Activated T-helper 2 cell treated with anti-CD3 and anti-CD28 coated beads, Interferon-gamma antibody, Interleukin-2, Interleukin-4, amounts not matched to agents 10 μg/mL and 5 μg/mL and 100 μg/mL, durations not matched to agents 14 hours and 24 hours and 36 hours (primary cell): ENCODE measurements at regions of chr2 and their contacts with region 1.

Region 1: DNA sequence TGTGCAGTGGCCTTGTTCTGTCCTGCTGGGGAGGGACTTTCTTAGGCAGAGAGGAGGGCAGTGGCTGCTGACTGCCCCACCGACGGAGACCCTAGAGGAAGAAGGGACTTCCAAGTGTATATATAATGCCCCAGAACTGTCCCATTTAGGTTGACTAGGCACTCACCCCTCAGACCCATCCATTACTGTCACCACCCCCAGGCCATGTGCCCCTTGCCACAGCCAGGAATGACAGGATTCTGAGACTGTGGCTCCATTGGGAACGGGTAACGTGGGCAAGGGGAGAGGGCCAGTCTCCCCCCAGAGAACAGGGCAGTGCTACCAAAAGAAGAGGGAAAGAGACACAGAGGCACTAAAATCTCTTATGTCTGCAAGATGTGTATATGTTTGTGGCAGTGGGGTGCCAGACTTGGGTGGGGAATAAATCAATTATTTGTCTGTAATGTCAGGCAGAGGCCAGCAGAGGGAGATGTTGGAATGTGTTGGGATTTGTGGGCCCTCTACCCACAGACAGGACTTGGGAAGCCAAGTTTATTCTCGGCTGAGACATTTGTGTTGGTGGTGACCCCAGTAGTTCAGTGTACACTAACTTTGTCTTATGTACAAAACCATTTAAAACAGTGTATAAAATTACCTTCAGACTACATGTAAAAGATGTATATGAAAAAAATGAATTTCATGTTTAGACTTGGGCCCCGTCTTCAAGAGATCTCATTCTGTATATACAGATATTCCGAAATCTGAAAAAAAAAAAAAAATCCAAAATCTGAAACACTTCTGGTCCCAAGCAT is 24.0 kb upstream of the TMEM37 start:
- DNase-seq: no peak
- H3K4me3 Mint-ChIP-seq: no peak overlapping the region
- H3K27ac Mint-ChIP-seq: no peak overlapping the region
- H3K4me1 Mint-ChIP-seq: no peaks in the 10 kb centered on the region
- H3K27me3 Mint-ChIP-seq: peaks cover 6% of the 10 kb centered on the region

Region 2: GRCh38 chr2:119476301-119477021 is 68.8 kb after region 1 on chr2:
- intact Hi-C with region 1: loop called (anchors 1 kb)
- DNase-seq: peak; percentile 22
- H3K4me3 Mint-ChIP-seq: no peak overlapping the region
- H3K27ac Mint-ChIP-seq: no peak overlapping the region
- H3K4me1 Mint-ChIP-seq: no peaks in the 10 kb centered on the region
- H3K27me3 Mint-ChIP-seq: no peaks in the 10 kb centered on the region